Activated CD4-positive, alpha-beta T cell treated with anti-CD3 and anti-CD28 coated beads for 36 hours (primary cell): ENCODE measurements at regions of chr4 and their contacts with region 1.

Region 1: DNA sequence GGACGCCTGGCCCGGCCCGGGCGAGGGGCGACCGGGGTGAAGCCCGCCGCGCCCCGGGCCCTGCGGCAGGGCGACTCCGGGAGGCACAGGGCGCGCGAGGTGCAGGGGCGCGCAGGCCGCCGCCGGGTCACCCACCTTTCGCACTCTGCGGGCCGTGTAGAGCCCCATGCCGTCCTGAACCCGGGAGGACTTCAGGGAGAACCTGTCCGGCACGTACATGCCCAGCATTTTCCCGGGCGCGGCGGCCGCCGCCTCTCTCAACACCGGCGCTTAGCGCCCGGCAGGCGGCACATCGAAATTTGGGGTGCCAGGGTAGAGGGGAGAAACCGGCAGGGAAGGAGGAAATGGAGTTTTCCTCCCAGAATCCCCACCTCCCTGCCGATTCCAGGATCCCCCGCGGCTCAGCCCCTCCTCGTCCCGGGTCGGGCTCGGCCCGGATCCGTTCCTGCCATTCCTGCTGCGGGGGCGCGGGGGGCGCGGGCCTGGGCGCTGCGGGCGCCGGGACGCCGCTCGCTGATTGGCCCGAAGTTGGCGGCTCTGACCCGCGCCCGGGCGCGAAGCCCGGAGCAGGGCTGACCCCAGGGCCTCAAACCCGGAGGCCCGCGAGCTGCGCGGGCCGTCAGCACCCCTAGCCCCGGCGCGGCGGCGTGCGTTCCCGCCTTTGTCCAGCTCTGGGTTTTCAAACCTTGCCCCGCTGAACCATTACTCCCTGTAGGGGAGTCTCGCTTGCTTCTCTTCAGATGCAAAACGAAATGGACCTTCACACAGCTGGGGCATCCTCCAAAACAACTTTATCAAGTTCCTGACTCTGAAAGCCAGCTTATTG is at the start of gene PRDM5:
- DNase-seq: peak; percentile 49
- ATAC-seq: peak; percentile 68
- H3K4me3 Mint-ChIP-seq: peak within 1 kb of the TSS; percentile 74
- H3K27ac Mint-ChIP-seq: peak within 1 kb of the TSS; percentile 28
- H3K4me1 Mint-ChIP-seq: peaks cover 17% of the 10 kb centered on the region
- H3K27me3 Mint-ChIP-seq: peaks cover 30% of the 10 kb centered on the region
- total RNA-seq, gene PRDM5: 0.05 TPM in 1 of 2 experiments, not detected in the other

Region 2: DNA sequence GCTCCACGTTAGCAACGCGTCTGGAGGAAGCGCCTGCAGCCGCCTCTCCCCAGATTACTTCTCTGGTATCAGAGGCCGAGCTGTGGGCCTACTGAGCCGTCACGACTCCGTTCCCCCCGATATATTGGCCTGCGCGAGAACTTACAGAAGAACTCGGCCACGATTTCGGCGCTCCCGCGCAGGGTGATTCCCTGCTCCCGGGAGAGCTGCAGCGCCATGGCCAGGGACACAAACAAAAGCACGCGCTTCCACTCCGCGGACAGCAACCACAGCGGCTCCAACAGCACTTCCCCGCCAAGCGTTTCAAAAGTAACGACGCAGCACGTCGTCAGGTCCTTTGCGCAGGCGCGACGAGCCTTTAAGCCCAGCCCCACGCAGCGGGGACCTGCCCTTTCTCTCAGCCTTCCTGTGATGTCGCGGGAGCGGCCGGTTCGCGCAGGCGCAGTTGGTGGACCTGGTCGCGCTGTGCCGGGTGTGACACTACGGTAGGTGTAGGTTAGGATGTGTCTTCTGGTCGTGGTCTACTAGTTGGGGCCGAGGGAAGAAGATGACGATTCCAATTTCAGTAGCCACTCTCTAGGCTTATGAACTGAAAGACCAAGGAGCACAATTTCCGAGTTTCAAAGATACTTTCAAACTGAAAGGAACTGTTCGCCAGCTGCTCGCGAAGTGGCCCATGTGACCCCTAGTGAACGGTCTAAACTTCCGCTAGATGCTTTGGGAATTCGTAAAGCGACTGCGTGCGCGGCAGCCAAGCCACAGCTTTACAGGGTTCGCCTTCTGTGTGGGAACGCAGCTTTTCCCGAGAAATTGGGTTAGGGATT is 855.9 kb before region 1 on chr4 and contains the start of gene MAD2L1:
- CTCF ChIA-PET with region 1: interaction called, 3 read pairs
- POLR2A ChIA-PET with region 1: no interaction called
- intact Hi-C with region 1: loop called in 1 of 2 experiments (anchors 5 kb)
- DNase-seq: peak; percentile 99
- ATAC-seq: peak; percentile 94
- H3K4me3 Mint-ChIP-seq: peak within 1 kb of the TSS; percentile 86
- H3K27ac Mint-ChIP-seq: peak within 1 kb of the TSS; percentile 97
- H3K4me1 Mint-ChIP-seq: peaks cover 58% of the 10 kb centered on the region
- H3K27me3 Mint-ChIP-seq: no peaks in the 10 kb centered on the region
- total RNA-seq, gene MAD2L1: 55.8 to 104 TPM

Region 3: DNA sequence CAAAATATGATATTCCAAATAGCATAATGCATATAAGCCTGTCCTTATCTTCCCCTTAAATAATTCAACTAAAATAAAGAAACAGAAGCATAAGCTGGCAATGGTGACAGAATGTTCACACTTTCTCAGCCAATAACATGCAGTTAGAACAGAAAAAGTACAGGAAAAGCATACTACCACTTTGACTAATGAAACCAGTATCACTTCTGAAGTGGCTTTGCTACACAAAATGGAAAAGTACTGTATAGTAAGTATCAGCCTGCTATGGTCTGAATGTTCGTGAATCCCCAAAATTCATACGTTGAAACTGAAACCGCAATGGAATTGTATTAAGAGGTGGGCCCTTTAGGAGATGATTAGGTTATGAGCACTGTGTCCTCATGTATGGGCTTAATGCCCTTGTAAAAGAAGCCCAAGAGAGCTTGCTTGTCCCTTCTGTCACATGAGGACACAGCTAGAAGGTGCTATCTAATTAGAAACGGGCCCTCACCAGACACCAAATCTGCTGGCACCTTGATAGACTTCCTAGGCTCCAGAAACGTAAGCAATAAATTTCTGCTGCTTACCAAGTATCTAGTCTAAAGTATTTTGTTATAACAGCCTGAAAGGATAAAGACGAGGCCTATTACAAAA is 102.7 kb before region 1 on chr4:
- CTCF ChIA-PET with region 1: no interaction called
- POLR2A ChIA-PET with region 1: no interaction called
- intact Hi-C with region 1: no loop called
- DNase-seq: no peak
- ATAC-seq: peak; percentile 88
- H3K4me3 Mint-ChIP-seq: no peak overlapping the region
- H3K27ac Mint-ChIP-seq: no peak overlapping the region
- H3K4me1 Mint-ChIP-seq: peaks cover 5% of the 10 kb centered on the region
- H3K27me3 Mint-ChIP-seq: peaks cover 2% of the 10 kb centered on the region

Region 4: DNA sequence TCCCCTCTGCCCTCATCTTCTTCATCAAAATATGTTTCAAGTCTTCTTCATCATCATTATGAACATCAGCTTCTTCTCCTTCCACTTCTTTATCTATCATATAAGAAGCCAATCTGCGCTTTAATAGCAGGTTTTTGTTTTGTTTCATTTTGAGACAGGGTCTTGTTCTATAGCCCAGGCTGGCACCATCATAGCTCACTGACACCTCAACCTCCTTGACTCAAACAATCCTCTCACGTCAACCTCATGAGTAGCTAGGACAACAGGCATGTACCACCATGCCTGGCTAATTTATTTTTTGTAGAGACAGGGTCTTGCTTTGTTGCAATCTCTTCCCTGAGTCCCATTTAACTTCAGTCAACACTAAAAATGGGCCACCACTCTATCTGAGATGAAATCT is 27.0 kb before region 1 on chr4:
- CTCF ChIA-PET with region 1: interaction called, 3 read pairs
- POLR2A ChIA-PET with region 1: no interaction called
- intact Hi-C with region 1: loop called in 1 of 2 experiments (anchors 1 kb)
- DNase-seq: no peak
- ATAC-seq: no peak
- H3K4me3 Mint-ChIP-seq: no peak overlapping the region
- H3K27ac Mint-ChIP-seq: no peak overlapping the region
- H3K4me1 Mint-ChIP-seq: no peaks in the 10 kb centered on the region
- H3K27me3 Mint-ChIP-seq: peaks cover 6% of the 10 kb centered on the region

Region 5: DNA sequence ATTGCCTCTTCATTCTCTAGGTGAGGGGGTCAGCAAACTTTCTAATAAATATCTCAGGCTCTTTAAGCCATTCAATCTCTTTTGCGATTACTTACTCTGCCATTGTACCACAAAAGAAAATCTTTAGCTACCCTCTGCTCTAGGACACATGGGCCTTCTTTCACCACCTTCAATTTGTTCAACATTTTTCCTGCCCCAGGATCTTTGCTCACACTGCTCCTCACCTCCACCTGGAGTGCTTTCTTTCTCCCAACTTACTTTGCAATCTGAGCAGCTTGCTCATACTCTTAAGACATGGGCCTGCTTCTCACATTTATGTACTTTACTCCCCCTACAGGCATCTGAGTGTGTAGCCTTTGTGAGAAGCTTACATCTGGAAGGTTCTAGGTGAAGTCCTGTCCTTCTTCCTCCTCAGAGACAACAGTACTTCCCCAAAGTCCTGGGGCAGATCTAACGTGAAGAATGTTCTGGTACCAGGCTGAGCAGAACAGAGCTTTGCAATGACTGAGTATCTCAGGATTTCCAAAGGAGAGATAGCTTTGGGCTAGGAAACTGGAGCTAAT is 54.9 kb after region 1 on chr4:
- CTCF ChIA-PET with region 1: no interaction called
- POLR2A ChIA-PET with region 1: no interaction called
- intact Hi-C with region 1: loop called in 1 of 2 experiments (anchors 5 kb)
- DNase-seq: no peak
- ATAC-seq: peak; percentile 83
- H3K4me3 Mint-ChIP-seq: no peak overlapping the region
- H3K27ac Mint-ChIP-seq: no peak overlapping the region
- H3K4me1 Mint-ChIP-seq: peaks cover 5% of the 10 kb centered on the region
- H3K27me3 Mint-ChIP-seq: no peaks in the 10 kb centered on the region

Region 6: DNA sequence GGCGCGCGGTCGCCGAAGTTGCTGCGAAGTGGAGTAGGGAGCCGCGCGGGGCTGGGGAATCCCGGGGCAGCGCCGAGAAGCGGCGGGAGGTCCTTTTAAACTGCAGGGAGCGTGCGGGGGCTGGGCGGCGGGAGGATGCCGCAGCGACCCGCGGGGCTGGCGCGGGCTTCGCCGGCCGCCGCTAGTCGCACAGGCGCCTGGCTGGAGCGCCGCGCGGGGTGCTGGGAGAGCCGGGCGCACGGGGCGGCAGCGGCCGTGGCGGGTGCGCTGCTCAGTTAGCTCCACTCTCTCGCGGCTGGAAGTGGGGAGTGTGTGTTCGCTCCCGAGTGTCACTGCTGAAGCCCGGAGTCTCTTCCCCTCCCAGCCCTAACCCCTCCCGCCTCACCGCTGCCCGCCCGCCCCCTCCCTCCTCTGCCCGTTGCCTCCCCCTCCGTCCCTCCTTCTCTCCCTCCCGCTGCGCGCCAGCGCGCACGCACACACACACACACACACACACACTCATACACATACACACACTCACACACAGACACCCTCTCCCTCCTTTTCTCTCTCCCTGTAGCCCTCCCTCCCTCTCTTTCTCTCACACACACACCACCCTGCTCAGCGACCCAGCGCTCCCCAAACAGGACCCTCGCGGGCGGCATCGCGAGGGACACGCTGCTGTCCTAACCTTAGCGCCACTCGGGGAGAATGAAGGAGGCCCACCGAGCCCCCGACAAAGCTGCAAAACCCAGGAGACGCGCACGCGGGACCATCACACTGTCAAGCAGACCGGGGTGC is 149.8 kb after region 1 on chr4 and contains the start of gene NDNF:
- CTCF ChIA-PET with region 1: no interaction called
- POLR2A ChIA-PET with region 1: no interaction called
- intact Hi-C with region 1: loop called in 1 of 2 experiments (anchors 10 kb)
- DNase-seq: peak; percentile 65
- ATAC-seq: peak; percentile 72
- H3K4me3 Mint-ChIP-seq: peak within 1 kb of the TSS; percentile 73
- H3K27ac Mint-ChIP-seq: no peak within 1 kb of the TSS
- H3K4me1 Mint-ChIP-seq: peaks cover 16% of the 10 kb centered on the region
- H3K27me3 Mint-ChIP-seq: peaks cover 60% of the 10 kb centered on the region
- total RNA-seq, gene NDNF: 0.11 to 0.16 TPM

Region 7: DNA sequence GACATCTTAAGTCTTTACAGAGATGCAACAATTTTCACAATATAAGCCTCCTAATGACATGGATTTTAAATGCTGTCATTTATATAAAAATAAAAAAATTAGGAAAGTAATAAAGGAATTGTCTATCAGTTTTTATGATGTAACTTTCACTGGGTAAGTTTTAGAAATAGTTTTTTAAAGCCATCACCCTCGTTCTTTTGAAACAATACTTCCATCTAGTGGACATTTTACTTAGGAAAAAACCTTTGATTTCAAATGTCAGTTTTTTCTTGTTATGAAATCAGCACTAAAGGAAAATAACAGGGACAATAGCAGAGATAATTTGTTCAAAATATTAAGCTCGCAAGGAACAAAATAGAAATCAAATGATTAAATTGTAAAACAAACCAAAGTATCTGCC is 174.0 kb after region 1 on chr4:
- CTCF ChIA-PET with region 1: no interaction called
- POLR2A ChIA-PET with region 1: no interaction called
- intact Hi-C with region 1: loop called in 1 of 2 experiments (anchors 2 kb)
- DNase-seq: no peak
- ATAC-seq: no peak
- H3K4me3 Mint-ChIP-seq: no peak overlapping the region
- H3K27ac Mint-ChIP-seq: no peak overlapping the region
- H3K4me1 Mint-ChIP-seq: no peaks in the 10 kb centered on the region
- H3K27me3 Mint-ChIP-seq: no peaks in the 10 kb centered on the region